ENCODE measurements at regions of chr6 and their contacts with region 1.

Region 1: GRCh38 chr6:87139236-87139635 is 16.1 kb upstream of the ZNF292 start:
- DNase-seq: no peak
- ATAC-seq: peak; percentile 49 to 71

Region 2: GRCh38 chr6:87237804-87238203 is 98.6 kb after region 1 on chr6:
- intact Hi-C with region 1: loop called (anchors 2 to 5 kb)
- DNase-seq: no peak
- ATAC-seq: peak in 1 of 2 donors; percentile 44